ENCODE measurements at regions of chr11 and their contacts with region 1.

Region 1: GRCh38 chr11:18698341-18699268 is at the start of gene TMEM86A:
- DNase-seq: peak; percentile 97
- H3K4me3 Mint-ChIP-seq: peak within 1 kb of the TSS; percentile 81
- H3K27ac Mint-ChIP-seq: peak within 1 kb of the TSS; percentile 26
- H3K4me1 Mint-ChIP-seq: peaks cover 21% of the 10 kb centered on the region
- H3K27me3 Mint-ChIP-seq: peaks cover 23% of the 10 kb centered on the region
- total RNA-seq, gene TMEM86A: 0.21 and 0.73 TPM in 2 replicates

Region 2: GRCh38 chr11:18588297-18589252 is 110.0 kb before region 1 on chr11 and contains the start of gene UEVLD:
- intact Hi-C with region 1: loop called (anchors 2 kb)
- DNase-seq: peak; percentile 91
- H3K4me3 Mint-ChIP-seq: no peak within 1 kb of the TSS
- H3K27ac Mint-ChIP-seq: no peak within 1 kb of the TSS
- H3K4me1 Mint-ChIP-seq: peaks cover 12% of the 10 kb centered on the region
- H3K27me3 Mint-ChIP-seq: no peaks in the 10 kb centered on the region
- total RNA-seq, gene UEVLD: 19.2 and 20.7 TPM in 2 replicates

Region 3: DNA sequence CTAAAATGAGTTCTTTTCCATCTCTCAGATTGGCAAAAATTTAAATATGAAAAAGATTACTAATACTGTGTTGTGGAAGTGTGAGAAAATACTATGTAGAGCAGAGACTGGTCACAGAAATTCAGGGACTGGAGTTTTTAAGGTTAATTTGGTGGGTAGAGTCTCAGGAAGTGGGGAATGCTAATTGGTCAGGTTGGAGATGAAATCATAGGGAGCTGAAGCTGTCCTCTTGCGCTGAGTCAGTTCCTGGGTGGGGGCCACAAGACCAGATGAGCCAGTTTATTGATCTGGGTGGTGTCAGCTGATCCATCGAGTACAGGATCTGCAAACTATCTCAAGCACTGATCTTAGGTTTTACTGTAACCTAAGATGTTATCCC is 29.4 kb before region 1 on chr11:
- intact Hi-C with region 1: loop called (anchors 1 kb)
- DNase-seq: peak; percentile 68
- H3K4me3 Mint-ChIP-seq: peak overlapping the region; percentile 39
- H3K27ac Mint-ChIP-seq: peak overlapping the region; percentile 62
- H3K4me1 Mint-ChIP-seq: peaks cover 34% of the 10 kb centered on the region
- H3K27me3 Mint-ChIP-seq: peaks cover 12% of the 10 kb centered on the region